HepG2 (cell line): ENCODE measurements at regions of chr3 and their contacts with region 1.

Region 1: DNA sequence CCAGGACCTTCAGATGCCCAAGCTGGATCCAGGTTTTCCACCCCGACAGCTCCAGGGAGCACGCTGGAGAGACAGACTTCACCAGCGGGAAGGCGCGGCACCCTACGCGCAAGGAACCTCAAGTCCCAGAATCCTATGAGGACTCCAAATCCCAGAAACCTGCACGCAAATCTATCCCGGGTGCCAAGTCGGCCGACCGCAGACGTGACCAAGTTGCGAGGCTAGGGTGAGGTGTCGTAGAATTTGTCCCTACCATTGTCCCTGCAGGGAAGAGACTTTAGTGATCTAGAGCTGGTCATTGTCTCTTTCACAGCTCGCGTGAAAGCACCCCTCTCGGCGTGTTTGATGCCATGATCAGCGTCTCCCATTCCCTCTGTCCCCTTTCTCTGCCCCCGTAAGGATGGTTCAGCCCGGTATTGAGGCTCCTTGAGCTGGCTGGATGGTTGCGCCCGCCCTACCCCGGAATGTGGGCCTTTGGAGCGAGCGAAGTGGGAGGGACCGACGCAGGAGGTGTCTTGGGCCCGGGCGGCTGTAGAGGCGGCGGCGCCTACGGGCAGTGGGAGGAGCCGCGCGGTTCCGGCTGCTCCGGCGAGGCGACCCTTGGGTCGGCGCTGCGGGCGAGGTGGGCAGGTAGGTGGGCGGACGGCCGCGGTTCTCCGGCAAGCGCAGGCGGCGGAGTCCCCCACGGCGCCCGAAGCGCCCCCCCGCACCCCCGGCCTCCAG is at the start of gene PRKCI:
- DNase-seq: peak; percentile 89
- ATAC-seq: peak; percentile 97
- H3K4me3 ChIP-seq: peak within 1 kb of the TSS; percentile 80 to 96 (median 94)
- H3K27ac ChIP-seq: peak within 1 kb of the TSS; percentile 88
- H3K4me1 ChIP-seq: peaks cover 32% of the 10 kb centered on the region
- H3K27me3 ChIP-seq: no peaks in the 10 kb centered on the region; a peak in 1 of 5 replicates
- CTCF ChIP-seq: 0 out of 2 replicates have a peak, but pooled peaks have one; percentile 6
- EP300 ChIP-seq: no peak
- POLR2A ChIP-seq: peak in 1 of 2 experiments; percentile 72; a peak in 2 of 4 replicates
- RAD21 ChIP-seq: peak; percentile 18; the same call in 1 of the 2 replicates
- total RNA-seq, gene PRKCI: 30.4 and 39.1 TPM in 2 replicates

Region 2: GRCh38 chr3:170164707-170165106 is 57.4 kb before region 1 on chr3:
- CTCF ChIA-PET with region 1: no interaction called
- POLR2A ChIA-PET with region 1: no interaction called
- in situ Hi-C with region 1: no loop called
- intact Hi-C with region 1: no loop called
- DNase-seq: no peak
- ATAC-seq: no peak
- H3K4me3 ChIP-seq: no peak overlapping the region
- H3K27ac ChIP-seq: no peak overlapping the region
- H3K4me1 ChIP-seq: peaks cover 11% of the 10 kb centered on the region
- H3K27me3 ChIP-seq: no peaks in the 10 kb centered on the region
- CTCF ChIP-seq: no peak
- EP300 ChIP-seq: no peak
- POLR2A ChIP-seq: no peak
- RAD21 ChIP-seq: no peak

Region 3: DNA sequence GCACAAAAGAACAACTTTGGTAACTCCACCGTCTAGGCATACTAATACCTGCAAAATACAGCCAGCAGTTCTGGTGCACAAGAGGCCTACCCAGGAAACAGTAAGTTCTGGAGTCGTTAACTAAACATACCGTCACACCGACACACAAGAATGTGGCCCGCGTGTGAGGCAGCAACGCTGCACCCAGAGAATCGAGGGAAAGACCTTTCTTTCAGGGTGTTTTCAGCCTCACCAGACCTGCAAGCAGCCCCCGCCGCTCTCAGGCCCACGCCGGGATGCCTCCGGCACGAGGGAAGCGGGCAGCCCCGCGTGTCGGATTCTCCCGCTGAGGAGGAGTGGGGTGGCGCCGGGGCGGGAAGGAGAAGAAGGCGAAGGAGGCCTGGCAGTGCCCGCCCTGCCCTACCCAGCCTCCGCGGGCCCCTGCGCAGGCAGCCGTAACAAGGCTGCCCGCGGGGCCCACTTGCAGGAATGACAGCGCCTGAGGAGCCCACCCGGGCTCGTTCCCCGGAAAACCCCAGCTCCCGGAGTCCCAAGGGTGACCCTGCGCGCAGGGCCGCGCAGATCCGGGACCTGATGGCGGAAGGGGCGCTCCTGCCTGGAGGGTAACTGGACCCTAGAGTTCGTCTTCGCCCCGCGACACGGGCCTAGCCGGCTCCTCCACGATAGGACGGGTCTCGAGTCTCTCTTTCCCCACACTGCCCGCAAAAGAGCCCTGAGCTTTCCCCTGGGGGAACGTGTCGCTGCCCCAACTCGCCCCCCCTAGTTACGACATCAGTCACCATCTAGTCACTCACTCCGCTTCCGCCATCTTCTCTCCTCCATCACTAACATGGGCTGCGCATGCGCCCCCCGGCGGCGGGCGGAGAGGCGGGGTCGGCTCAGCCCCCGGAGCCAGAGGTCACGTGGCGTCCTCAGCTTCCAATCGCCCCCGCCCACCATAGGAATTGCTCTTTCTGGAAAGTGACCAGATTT is 40.9 kb before region 1 on chr3 and contains the start of gene PHC3:
- CTCF ChIA-PET with region 1: no interaction called
- POLR2A ChIA-PET with region 1: interaction called, 3 read pairs
- in situ Hi-C with region 1: no loop called
- intact Hi-C with region 1: loop called (anchors 2 kb)
- DNase-seq: peak; percentile 87
- ATAC-seq: peak; percentile 86
- H3K4me3 ChIP-seq: peak within 1 kb of the TSS; percentile 87 to 99 (median 98)
- H3K27ac ChIP-seq: peak within 1 kb of the TSS; percentile 78
- H3K4me1 ChIP-seq: peaks cover 35% of the 10 kb centered on the region
- H3K27me3 ChIP-seq: no peaks in the 10 kb centered on the region; a peak in 1 of 5 replicates
- CTCF ChIP-seq: peak; percentile 60
- EP300 ChIP-seq: no peak
- POLR2A ChIP-seq: peak; percentile 79 to 86
- RAD21 ChIP-seq: no peak
- total RNA-seq, gene PHC3: 16.5 and 24.1 TPM in 2 replicates

Region 4: GRCh38 chr3:170240671-170241070 is 18.6 kb after region 1 on chr3:
- CTCF ChIA-PET with region 1: no interaction called
- POLR2A ChIA-PET with region 1: no interaction called
- in situ Hi-C with region 1: no loop called
- intact Hi-C with region 1: no loop called
- DNase-seq: no peak
- ATAC-seq: no peak
- H3K4me3 ChIP-seq: no peak overlapping the region
- H3K27ac ChIP-seq: no peak overlapping the region
- H3K4me1 ChIP-seq: no peaks in the 10 kb centered on the region
- H3K27me3 ChIP-seq: no peaks in the 10 kb centered on the region
- CTCF ChIP-seq: no peak
- EP300 ChIP-seq: no peak
- POLR2A ChIP-seq: no peak
- RAD21 ChIP-seq: no peak

Region 5: DNA sequence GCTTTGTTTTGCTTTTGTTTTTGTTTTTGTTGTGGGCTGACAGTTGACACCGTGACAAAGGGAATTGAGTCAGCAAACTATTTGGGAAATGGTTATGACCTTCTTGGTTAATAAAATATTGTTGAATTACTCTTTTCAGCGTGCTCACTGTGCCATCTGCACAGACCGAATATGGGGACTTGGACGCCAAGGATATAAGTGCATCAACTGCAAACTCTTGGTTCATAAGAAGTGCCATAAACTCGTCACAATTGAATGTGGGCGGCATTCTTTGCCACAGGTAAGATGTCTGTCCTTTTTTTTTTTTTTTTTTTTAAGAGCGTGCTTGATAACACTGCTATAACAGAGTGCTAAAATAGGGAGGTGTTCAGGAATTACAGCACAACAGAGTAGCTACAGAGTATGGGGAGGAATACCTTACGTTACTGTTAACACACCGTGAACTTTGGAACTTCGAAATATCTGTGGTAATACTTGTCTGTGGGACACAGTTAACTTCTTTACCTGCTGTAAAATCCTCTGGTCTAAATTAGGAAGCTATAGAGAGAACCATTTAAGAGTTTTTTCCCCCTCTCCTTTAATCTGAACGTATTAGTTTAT is 48.3 kb after region 1 on chr3:
- CTCF ChIA-PET with region 1: no interaction called
- POLR2A ChIA-PET with region 1: no interaction called
- in situ Hi-C with region 1: no loop called
- intact Hi-C with region 1: no loop called
- DNase-seq: peak; percentile 86
- ATAC-seq: peak; percentile 100
- H3K4me3 ChIP-seq: peak overlapping the region in 1 of 3 experiments; percentile 30; a peak in 1 of 6 replicates
- H3K27ac ChIP-seq: peak overlapping the region; percentile 45
- H3K4me1 ChIP-seq: peaks cover 26% of the 10 kb centered on the region
- H3K27me3 ChIP-seq: no peaks in the 10 kb centered on the region
- CTCF ChIP-seq: no peak
- EP300 ChIP-seq: 0 out of 4 replicates have a peak, but pooled peaks of 1 of the 2 experiments have one; percentile 23
- POLR2A ChIP-seq: no peak
- RAD21 ChIP-seq: no peak